ENCODE measurements at regions of chr2 and their contacts with region 1.

Region 1: DNA sequence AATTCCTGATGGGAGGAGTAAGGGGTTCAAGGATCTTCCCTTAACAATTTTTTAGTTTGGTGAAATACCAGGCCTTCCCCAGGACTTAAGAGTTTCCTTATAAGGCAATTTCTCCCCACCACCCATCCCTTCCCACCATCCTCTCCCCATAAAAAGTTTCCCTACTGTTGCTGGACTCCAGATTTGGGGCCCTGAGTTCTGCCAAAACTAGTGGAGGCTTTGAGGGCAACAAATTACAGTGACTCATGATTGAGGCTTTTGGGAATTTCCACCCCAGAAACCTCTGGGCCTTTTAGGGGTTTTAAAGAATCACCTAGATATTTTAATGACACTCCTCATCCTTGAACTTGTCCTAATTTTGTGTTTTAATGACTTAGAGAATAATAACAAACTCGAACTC is 14.3 kb upstream of the EN1 start:
- DNase-seq: no peak
- ATAC-seq: no peak
- H3K4me3 ChIP-seq: no peak overlapping the region
- H3K27ac ChIP-seq: no peak overlapping the region
- H3K4me1 ChIP-seq: peaks cover 0 to 3% (median 0%) of the 10 kb centered on the region in 4 donors
- H3K27me3 ChIP-seq: peaks cover 20 to 22% of the 10 kb centered on the region in 2 donors
- CTCF ChIP-seq: no peak
- POLR2A ChIP-seq: no peak

Region 2: GRCh38 chr2:118219611-118220010 is 642.1 kb before region 1 on chr2:
- intact Hi-C with region 1: loop called in 1 of 2 experiments (anchors 5 kb)
- DNase-seq: no peak
- ATAC-seq: no peak
- H3K4me3 ChIP-seq: no peak overlapping the region
- H3K27ac ChIP-seq: no peak overlapping the region
- H3K4me1 ChIP-seq: peaks cover 0 to 13% (median 5%) of the 10 kb centered on the region in 4 donors
- H3K27me3 ChIP-seq: peaks cover 7 to 23% of the 10 kb centered on the region in 2 donors
- CTCF ChIP-seq: no peak
- POLR2A ChIP-seq: no peak

Region 3: GRCh38 chr2:118945881-118946280 is 84.2 kb after region 1 on chr2:
- intact Hi-C with region 1: no loop called
- DNase-seq: no peak
- ATAC-seq: no peak
- H3K4me3 ChIP-seq: no peak overlapping the region
- H3K27ac ChIP-seq: no peak overlapping the region
- H3K4me1 ChIP-seq: peaks cover 0 to 4% (median 0%) of the 10 kb centered on the region in 4 donors
- H3K27me3 ChIP-seq: no peaks in the 10 kb centered on the region
- CTCF ChIP-seq: no peak
- POLR2A ChIP-seq: no peak

Measured in right lobe of liver (tissue), 6 donors.